ENCODE measurements at regions of chr1 and their contacts with region 1.

Region 1: DNA sequence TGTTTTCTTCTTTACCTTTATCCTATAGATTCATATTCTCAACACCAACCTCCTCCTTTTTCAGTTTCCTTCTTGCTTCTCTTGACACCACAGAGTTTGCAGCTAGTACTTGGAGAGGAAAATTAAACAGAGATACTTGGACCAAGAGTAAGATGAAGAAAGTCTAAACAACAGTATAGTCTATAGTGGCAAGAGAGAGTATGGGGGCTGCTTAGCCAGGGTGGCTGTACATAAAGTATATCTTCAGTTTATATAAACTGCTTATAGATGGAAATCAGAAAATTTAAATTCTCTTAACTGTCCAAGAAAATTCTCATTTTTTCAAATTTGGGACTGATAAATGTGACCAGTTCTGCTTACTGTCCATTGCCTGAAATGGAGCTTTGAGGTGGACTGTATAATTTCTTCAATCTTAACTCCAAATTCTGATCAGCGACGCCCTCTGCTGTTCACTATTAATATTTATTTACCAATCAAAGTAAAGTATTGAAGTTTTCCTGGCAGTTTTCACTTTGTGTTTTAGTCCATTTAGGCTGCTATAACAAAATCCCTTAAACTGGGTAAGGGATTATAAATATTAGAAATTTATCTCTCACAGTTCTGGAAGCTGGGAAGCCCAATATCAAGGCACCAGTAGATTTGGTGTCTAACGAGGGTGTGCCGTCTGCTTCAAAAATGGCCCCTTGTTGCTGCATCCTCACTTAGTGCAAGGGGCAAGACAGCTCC is 14.8 kb upstream of the METTL18 start:
- DNase-seq: peak; percentile 29
- ATAC-seq: peak; percentile 53; the same call in 2 of the 3 replicates
- H3K4me3 ChIP-seq: no peak overlapping the region
- H3K27ac ChIP-seq: no peak overlapping the region
- H3K4me1 ChIP-seq: no peaks in the 10 kb centered on the region
- H3K27me3 ChIP-seq: no peaks in the 10 kb centered on the region
- CTCF ChIP-seq: peak; percentile 56
- EP300 ChIP-seq: no peak
- POLR2A ChIP-seq: no peak
- RAD21 ChIP-seq: 0 out of 2 replicates have a peak, but pooled peaks have one; percentile 25

Region 2: GRCh38 chr1:169601093-169601881 is 208.2 kb before region 1 on chr1:
- CTCF ChIA-PET with region 1: interaction called, 15 read pairs
- POLR2A ChIA-PET with region 1: no interaction called
- in situ Hi-C with region 1: loop called (anchors 5 kb)
- intact Hi-C with region 1: loop called (anchors 1 kb)
- DNase-seq: peak; percentile 30
- ATAC-seq: peak; percentile 65; the same call in 2 of the 3 replicates
- H3K4me3 ChIP-seq: no peak overlapping the region
- H3K27ac ChIP-seq: no peak overlapping the region
- H3K4me1 ChIP-seq: peaks cover 12% of the 10 kb centered on the region
- H3K27me3 ChIP-seq: no peaks in the 10 kb centered on the region
- CTCF ChIP-seq: peak; percentile 69
- EP300 ChIP-seq: no peak
- POLR2A ChIP-seq: no peak
- RAD21 ChIP-seq: 0 out of 2 replicates have a peak, but pooled peaks have one; percentile 30

Region 3: GRCh38 chr1:169698976-169699375 is 110.6 kb before region 1 on chr1:
- CTCF ChIA-PET with region 1: no interaction called
- POLR2A ChIA-PET with region 1: no interaction called
- in situ Hi-C with region 1: no loop called
- intact Hi-C with region 1: loop called (anchors 1 kb)
- DNase-seq: no peak
- ATAC-seq: no peak
- H3K4me3 ChIP-seq: no peak overlapping the region
- H3K27ac ChIP-seq: no peak overlapping the region
- H3K4me1 ChIP-seq: no peaks in the 10 kb centered on the region
- H3K27me3 ChIP-seq: 0 out of 5 replicates have a peak, but pooled peaks cover 0 to 4% of the 10 kb centered on the region in 2 experiments
- CTCF ChIP-seq: no peak
- EP300 ChIP-seq: no peak
- POLR2A ChIP-seq: no peak
- RAD21 ChIP-seq: no peak